Aorta (tissue), 5 donors: ENCODE measurements at regions of chr6 and their contacts with region 1.

Region 1: DNA sequence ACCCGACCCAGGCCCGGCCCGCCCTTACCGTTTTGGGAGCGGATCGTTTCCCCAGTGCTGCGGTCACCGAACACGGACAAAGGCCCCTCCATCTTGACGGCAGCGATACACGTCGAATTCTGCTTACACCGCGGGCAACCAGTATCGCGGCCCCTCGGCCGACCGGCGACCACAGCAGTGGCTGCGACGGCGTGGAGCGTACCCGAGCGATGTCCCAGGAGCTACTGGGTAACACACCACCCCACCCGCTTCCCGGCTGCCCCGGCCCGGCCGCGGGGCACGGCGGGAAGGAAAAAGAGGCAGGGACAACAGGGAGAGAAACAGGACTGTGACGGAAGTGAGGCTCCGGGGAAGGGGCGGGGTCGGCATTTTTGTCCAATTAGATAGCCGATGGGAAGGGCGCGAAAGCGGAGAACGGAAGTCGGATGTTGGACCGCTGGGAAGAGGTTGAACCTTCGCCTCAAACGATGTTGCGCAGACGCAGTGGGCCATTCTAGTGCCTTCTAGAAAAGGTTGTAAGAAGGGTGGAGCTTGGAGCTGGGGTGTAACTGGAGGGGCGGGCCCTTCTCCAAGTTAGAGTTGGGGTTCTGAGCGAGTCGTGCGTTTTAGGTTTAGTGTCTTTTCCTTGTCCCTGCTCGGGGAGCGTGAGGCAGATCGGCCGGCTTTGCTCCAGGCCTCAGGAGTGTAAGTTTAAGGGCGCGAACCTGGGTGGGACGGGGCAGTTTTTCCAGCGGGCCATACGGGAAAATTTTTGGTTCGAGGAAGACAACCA is at the start of gene TCP1:
- DNase-seq: peak; percentile 99 to 100
- ATAC-seq: peak; percentile 97
- H3K4me3 ChIP-seq: peak within 1 kb of the TSS; percentile 60 to 82
- H3K27ac ChIP-seq: peak within 1 kb of the TSS; percentile 10 to 72
- H3K4me1 ChIP-seq: peaks cover 0 to 3% of the 10 kb centered on the region in 2 donors
- H3K27me3 ChIP-seq: no peaks in the 10 kb centered on the region
- total RNA-seq, gene TCP1: 110 to 146 TPM

Region 2: DNA sequence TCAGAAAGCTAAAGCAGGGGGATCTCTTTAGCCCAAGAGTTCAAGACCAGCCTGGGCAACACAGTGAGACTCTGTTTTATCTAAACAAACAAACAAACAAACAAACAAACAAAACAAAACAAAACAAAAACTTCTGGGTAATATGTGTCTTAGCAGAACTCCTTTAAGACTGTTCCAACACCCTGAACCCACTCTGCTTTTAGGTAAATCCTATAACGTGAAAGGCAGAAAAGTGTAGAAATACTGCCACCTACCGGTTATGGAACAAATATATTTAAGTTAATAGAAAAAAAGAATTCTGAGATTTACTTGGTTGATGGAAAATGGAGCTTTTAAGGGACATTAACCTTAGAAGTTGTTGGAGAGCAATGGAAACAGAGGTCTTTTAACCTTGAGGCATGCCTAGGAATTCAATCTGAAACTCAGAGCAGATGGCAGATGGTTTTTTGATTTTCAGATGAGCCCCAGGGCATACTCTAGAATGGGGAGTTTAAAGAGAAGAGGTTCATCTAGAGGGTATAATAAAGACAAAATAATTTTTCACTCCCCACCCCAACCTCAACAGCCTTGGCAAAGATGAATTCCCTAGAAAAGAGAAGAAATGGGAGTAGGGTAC is 135.0 kb before region 1 on chr6:
- intact Hi-C with region 1: no loop called
- DNase-seq: no peak
- ATAC-seq: peak; percentile 54
- H3K4me3 ChIP-seq: no peak overlapping the region
- H3K27ac ChIP-seq: no peak overlapping the region
- H3K4me1 ChIP-seq: no peaks in the 10 kb centered on the region
- H3K27me3 ChIP-seq: no peaks in the 10 kb centered on the region

Region 3: DNA sequence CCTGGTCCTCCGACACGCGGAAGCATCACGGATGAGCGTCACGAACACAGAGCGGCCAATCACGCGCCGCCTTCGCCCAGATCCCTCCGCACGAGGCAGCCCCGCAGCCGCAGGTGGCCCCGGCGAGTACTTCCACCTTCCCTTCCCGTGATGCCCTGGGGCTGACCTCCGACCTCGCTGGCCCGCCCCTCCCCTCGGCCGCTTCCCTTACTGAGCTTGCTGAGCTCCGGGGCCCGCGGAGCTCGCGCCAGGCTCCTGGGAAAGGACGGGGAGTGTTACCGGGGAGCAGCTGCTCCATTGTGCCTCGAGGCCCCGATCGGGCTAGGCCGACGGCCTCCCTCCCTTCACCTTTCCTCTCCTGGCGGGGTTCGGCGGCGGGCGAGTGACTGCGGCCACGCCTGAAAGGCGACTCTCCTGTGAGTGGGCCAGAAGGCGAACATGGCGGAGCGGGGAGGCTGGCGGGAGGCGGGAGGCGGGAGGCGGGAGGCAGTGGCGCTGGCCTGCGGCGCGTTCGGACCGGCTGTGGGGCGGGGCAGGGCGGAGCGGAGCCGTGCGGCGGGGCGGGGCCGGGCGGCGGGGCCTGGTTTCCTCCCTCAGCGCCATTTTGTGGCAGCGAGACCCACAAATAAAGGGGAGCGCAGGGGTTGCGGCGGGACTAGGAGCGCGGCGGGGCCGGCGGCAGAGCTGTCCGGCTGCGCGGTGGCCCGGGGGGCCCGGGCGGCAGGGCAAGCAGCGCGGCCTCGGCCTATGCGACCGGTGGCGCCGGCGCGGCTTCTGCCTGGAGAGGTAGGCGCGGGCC is 62.4 kb before region 1 on chr6 and contains the start of gene WTAP:
- intact Hi-C with region 1: loop called in 1 of 2 experiments (anchors 1 kb)
- DNase-seq: peak; percentile 97 to 98
- ATAC-seq: peak; percentile 96
- H3K4me3 ChIP-seq: peak within 1 kb of the TSS; percentile 80 to 81
- H3K27ac ChIP-seq: peak within 1 kb of the TSS; percentile 93 to 97
- H3K4me1 ChIP-seq: peaks cover 0 to 2% of the 10 kb centered on the region in 2 donors
- H3K27me3 ChIP-seq: no peaks in the 10 kb centered on the region
- total RNA-seq, gene WTAP: 91.7 to 94.7 TPM

Region 4: DNA sequence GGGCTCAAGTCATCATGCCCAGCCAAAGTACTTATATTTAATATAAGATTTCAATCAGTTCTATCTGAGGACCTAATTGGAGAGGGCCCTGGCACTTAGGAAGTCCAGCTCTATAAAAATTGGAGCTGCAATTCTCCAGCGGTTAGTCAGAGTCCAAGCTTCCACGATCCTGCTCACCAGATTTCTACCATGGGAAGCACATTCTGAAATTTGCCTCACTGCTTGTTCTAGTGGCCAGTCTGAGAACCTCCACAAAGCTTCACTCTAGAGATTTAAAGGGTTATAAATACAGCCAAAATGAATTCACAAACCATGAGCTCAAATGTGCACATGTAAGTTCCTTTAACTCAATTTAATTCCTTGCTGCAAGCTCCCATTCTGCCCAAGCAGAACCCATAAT is 44.0 kb after region 1 on chr6:
- intact Hi-C with region 1: loop called in 1 of 2 experiments (anchors 5 kb)
- DNase-seq: no peak
- ATAC-seq: no peak
- H3K4me3 ChIP-seq: no peak overlapping the region
- H3K27ac ChIP-seq: no peak overlapping the region
- H3K4me1 ChIP-seq: peaks cover 0 to 4% of the 10 kb centered on the region in 2 donors
- H3K27me3 ChIP-seq: no peaks in the 10 kb centered on the region

Region 5: GRCh38 chr6:160010067-160010466 is 220.5 kb after region 1 on chr6:
- intact Hi-C with region 1: no loop called
- DNase-seq: peak in 1 of 2 donors; percentile 70
- ATAC-seq: peak; percentile 31
- H3K4me3 ChIP-seq: no peak overlapping the region
- H3K27ac ChIP-seq: no peak overlapping the region
- H3K4me1 ChIP-seq: no peaks in the 10 kb centered on the region
- H3K27me3 ChIP-seq: no peaks in the 10 kb centered on the region

Region 6: GRCh38 chr6:160102956-160103824 is 313.6 kb after region 1 on chr6:
- intact Hi-C with region 1: no loop called
- DNase-seq: no peak
- ATAC-seq: peak; percentile 42
- H3K4me3 ChIP-seq: no peak overlapping the region
- H3K27ac ChIP-seq: peak overlapping the region; percentile 8 to 77
- H3K4me1 ChIP-seq: peaks cover 2% of the 10 kb centered on the region in 2 donors
- H3K27me3 ChIP-seq: no peaks in the 10 kb centered on the region